ENCODE measurements at regions of chr3 and their contacts with region 1.

Region 1: GRCh38 chr3:183868796-183869195 is 15.9 kb downstream of the PARL start:
- DNase-seq: peak in 2 of 3 donors; percentile 61 to 65
- H3K4me3 ChIP-seq: no peak overlapping the region
- H3K27ac ChIP-seq: peak overlapping the region in 1 of 2 experiments; percentile 34
- H3K4me1 ChIP-seq: peaks cover 9 to 19% (median 15%) of the 10 kb centered on the region in 4 experiments
- H3K27me3 ChIP-seq: no peaks in the 10 kb centered on the region

Region 2: DNA sequence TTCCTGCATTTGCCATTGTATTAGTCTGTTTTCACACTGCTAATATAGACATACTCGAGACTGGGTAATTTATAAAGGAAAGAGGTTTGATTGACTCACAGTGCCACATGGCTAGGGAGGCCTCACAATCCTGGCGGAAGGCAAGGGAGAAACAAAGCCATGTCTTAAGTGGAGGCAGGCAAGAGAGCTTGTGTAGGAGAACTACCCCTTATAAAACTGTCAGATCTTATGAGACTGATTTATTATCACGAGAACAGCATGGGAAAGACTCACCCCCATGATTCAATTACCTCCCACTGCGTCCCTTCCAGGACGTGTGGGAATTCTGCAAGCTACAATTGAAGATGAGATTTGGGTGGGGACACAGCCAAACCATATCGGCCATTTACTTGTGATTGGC is 143.4 kb before region 1 on chr3:
- CTCF ChIA-PET with region 1: no interaction called
- POLR2A ChIA-PET with region 1: no interaction called
- DNase-seq: no peak
- H3K4me3 ChIP-seq: no peak overlapping the region
- H3K27ac ChIP-seq: no peak overlapping the region
- H3K4me1 ChIP-seq: no peaks in the 10 kb centered on the region
- H3K27me3 ChIP-seq: no peaks in the 10 kb centered on the region

Region 3: GRCh38 chr3:183884427-183885296 is 15.9 kb after region 1 on chr3 and contains the start of gene PARL:
- CTCF ChIA-PET with region 1: interaction called, 12 read pairs
- POLR2A ChIA-PET with region 1: interaction called, 5 read pairs
- DNase-seq: peak; percentile 92 to 95 (median 95)
- H3K4me3 ChIP-seq: peak within 1 kb of the TSS; percentile 73 to 98 (median 88)
- H3K27ac ChIP-seq: peak within 1 kb of the TSS; percentile 67 to 90
- H3K4me1 ChIP-seq: peaks cover 9 to 40% (median 28%) of the 10 kb centered on the region in 4 experiments
- H3K27me3 ChIP-seq: peaks cover 0 to 1% (median 0%) of the 10 kb centered on the region in 5 experiments